ENCODE measurements at regions of chr11 and their contacts with region 1.

Region 1: GRCh38 chr11:122215244-122215992 is 99.4 kb upstream of the BLID start:
- DNase-seq: peak; percentile 46
- H3K4me3 Mint-ChIP-seq: no peak overlapping the region
- H3K27ac Mint-ChIP-seq: no peak overlapping the region
- H3K4me1 Mint-ChIP-seq: no peaks in the 10 kb centered on the region
- H3K27me3 Mint-ChIP-seq: peaks cover 3% of the 10 kb centered on the region

Region 2: DNA sequence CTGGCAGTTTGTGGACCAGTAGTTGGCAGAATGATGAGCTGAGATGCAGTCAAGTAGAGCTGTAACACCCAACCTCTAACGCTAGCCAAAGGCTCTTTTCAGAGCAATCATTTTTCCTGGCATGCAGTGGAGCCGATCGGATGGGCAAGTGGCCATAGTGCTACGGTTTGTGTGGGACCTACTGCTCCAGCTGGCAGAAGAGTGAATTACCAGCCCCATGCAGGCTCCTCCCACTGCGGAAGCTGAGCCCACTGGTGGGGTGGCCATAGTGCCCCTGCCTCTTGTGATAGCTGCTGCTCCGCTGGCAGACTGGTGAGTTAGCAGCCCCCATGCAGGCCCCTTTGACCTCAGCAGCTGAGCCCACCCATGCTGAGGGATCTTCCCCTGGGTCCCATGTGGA is 949.8 kb before region 1 on chr11:
- CTCF ChIA-PET with region 1: no interaction called
- POLR2A ChIA-PET with region 1: no interaction called
- intact Hi-C with region 1: no loop called
- DNase-seq: no peak
- H3K4me3 Mint-ChIP-seq: no peak overlapping the region
- H3K27ac Mint-ChIP-seq: no peak overlapping the region
- H3K4me1 Mint-ChIP-seq: peaks cover 3% of the 10 kb centered on the region
- H3K27me3 Mint-ChIP-seq: peaks cover 39% of the 10 kb centered on the region

Region 3: DNA sequence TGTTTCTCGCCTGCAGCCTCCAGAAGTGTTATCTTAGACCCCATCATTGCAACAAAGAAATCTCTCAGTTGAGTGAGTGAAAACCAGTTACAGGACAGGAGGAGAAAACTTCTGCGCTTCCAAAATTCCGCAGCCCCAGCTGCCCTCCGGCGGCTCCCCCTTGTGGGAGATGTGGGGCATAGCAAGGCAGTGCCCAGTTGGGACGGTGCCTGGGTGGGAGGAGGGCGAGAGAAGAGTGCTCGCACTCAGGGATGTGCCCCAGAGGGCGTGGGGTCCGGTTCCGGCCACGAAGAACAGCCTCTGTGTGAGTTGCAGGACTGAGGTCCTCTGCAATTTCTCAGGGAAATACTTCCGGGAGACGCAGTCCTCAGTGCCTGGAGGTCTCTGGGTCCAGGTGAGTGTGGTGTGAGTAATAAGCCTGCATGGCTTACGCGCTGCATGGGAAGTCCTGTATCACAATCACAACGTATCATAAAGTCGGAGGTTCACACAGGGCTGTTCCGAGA is 12.4 kb before region 1 on chr11:
- CTCF ChIA-PET with region 1: interaction called, 11 read pairs
- POLR2A ChIA-PET with region 1: no interaction called
- intact Hi-C with region 1: no loop called
- DNase-seq: peak; percentile 59
- H3K4me3 Mint-ChIP-seq: no peak overlapping the region
- H3K27ac Mint-ChIP-seq: no peak overlapping the region
- H3K4me1 Mint-ChIP-seq: no peaks in the 10 kb centered on the region
- H3K27me3 Mint-ChIP-seq: peaks cover 22% of the 10 kb centered on the region

Region 4: GRCh38 chr11:122505304-122506006 is 290.0 kb after region 1 on chr11:
- CTCF ChIA-PET with region 1: interaction called, 29 read pairs
- POLR2A ChIA-PET with region 1: no interaction called
- intact Hi-C with region 1: loop called (anchors 1 kb)
- DNase-seq: peak; percentile 68
- H3K4me3 Mint-ChIP-seq: no peak overlapping the region
- H3K27ac Mint-ChIP-seq: no peak overlapping the region
- H3K4me1 Mint-ChIP-seq: no peaks in the 10 kb centered on the region
- H3K27me3 Mint-ChIP-seq: peaks cover 25% of the 10 kb centered on the region

Region 5: GRCh38 chr11:122584670-122585069 is 369.3 kb after region 1 on chr11:
- CTCF ChIA-PET with region 1: no interaction called
- POLR2A ChIA-PET with region 1: no interaction called
- intact Hi-C with region 1: loop called (anchors 10 kb)
- DNase-seq: no peak
- H3K4me3 Mint-ChIP-seq: no peak overlapping the region
- H3K27ac Mint-ChIP-seq: no peak overlapping the region
- H3K4me1 Mint-ChIP-seq: peaks cover 8% of the 10 kb centered on the region
- H3K27me3 Mint-ChIP-seq: peaks cover 7% of the 10 kb centered on the region